A673 (cell line): ENCODE measurements at regions of chr15 and their contacts with region 1.

Region 1: DNA sequence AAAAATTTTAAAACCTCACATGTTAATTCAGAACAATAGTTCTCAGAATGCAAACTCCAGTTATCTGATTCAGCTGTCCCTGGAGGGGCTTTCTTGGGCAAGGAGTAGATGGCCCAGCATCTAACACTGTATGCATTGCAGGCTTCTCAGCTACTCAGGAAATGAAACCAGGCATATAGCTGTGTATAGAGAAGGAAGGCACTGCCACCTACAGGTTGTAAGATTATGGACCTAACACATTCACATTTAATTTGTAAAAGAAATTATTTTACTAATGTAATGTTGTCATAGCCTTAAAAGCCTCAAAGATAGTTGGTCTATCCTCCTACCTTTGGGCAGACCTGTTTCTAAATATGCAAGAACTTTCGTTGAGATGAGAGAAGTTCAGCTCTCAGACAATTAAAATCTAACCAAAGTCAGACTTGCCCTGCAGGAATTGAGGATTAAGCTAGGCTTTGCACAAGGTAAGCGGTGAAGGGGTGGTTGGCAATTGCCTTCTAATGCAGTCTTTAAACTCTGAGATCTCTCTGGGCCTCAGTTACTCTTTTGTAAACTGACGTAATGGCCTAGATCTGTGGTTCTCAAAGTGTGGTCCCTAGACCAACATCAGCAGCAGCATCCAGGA is 132.8 kb upstream of the SLC24A5 start:
- DNase-seq: peak; percentile 87
- H3K4me3 ChIP-seq: no peak overlapping the region
- H3K27ac ChIP-seq: no peak overlapping the region
- H3K4me1 ChIP-seq: peaks cover 12% of the 10 kb centered on the region
- H3K27me3 ChIP-seq: no peaks in the 10 kb centered on the region
- CTCF ChIP-seq: peak; percentile 73

Region 2: DNA sequence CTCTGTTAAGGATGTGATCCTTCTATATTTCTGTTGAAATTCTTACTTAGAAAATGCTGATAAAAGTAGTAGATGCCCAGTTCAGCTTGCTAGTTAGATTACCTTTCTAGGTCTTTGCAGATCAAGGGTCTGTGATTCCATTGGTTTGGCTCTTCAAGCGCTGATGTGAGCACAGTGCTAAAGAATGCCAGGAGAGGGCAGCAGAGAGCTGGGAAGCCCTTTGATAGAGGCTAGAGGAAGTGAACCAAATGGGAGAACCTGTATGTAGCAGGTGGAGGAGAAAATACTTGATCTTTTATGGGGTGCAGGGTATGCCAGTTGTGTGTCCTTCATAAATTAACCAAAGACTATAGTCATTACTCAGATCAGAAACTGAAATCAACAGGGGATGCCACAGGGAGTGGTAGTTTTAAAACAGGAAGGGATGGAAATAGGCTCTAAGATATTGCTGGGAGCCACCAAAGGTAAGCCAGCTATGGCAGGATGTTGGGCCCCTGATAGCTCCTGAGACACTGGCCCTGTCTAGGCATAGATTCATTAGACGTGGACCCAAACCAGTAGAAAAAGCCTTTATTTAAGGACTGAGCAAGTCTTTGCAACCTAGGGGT is 1675.8 kb before region 1 on chr15:
- CTCF ChIA-PET with region 1: no interaction called
- POLR2A ChIA-PET with region 1: no interaction called
- intact Hi-C with region 1: loop called (anchors 5 kb)
- DNase-seq: peak; percentile 77
- H3K4me3 ChIP-seq: no peak overlapping the region
- H3K27ac ChIP-seq: no peak overlapping the region
- H3K4me1 ChIP-seq: no peaks in the 10 kb centered on the region
- H3K27me3 ChIP-seq: no peaks in the 10 kb centered on the region
- CTCF ChIP-seq: peak; percentile 93

Region 3: GRCh38 chr15:47422901-47423665 is 564.9 kb before region 1 on chr15:
- CTCF ChIA-PET with region 1: interaction called, 3 read pairs
- POLR2A ChIA-PET with region 1: no interaction called
- intact Hi-C with region 1: loop called (anchors 1 kb)
- DNase-seq: no peak
- H3K4me3 ChIP-seq: no peak overlapping the region
- H3K27ac ChIP-seq: peak overlapping the region; percentile 84
- H3K4me1 ChIP-seq: peaks cover 68% of the 10 kb centered on the region
- H3K27me3 ChIP-seq: no peaks in the 10 kb centered on the region
- CTCF ChIP-seq: no peak

Region 4: GRCh38 chr15:47711654-47712053 is 276.4 kb before region 1 on chr15:
- CTCF ChIA-PET with region 1: interaction called, 16 read pairs
- POLR2A ChIA-PET with region 1: no interaction called
- intact Hi-C with region 1: loop called (anchors 2 kb)
- DNase-seq: peak; percentile 56
- H3K4me3 ChIP-seq: no peak overlapping the region
- H3K27ac ChIP-seq: no peak overlapping the region
- H3K4me1 ChIP-seq: peaks cover 31% of the 10 kb centered on the region
- H3K27me3 ChIP-seq: no peaks in the 10 kb centered on the region
- CTCF ChIP-seq: peak; percentile 84

Region 5: DNA sequence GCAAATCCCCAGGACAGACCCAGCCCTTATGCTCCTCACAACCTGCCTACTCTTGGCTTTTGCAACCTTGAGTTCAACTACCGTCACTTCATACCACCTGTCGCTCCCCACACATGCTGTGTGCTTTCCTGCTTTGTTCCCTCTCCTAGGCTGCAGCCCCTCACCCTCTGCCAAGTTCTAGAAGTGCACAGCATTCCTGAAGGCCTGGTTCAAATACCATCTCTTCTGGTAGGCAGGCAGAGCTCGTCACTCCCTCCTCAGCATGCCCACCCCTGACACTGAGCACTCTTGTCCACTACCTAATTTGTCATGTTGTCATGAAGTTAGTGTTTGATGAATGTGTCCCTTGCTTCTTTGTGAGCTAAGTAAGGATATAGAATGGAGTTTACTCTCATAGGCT is 141.1 kb before region 1 on chr15:
- CTCF ChIA-PET with region 1: no interaction called
- POLR2A ChIA-PET with region 1: no interaction called
- intact Hi-C with region 1: no loop called
- DNase-seq: no peak
- H3K4me3 ChIP-seq: no peak overlapping the region
- H3K27ac ChIP-seq: no peak overlapping the region
- H3K4me1 ChIP-seq: no peaks in the 10 kb centered on the region
- H3K27me3 ChIP-seq: no peaks in the 10 kb centered on the region
- CTCF ChIP-seq: no peak

Region 6: GRCh38 chr15:48084759-48085590 is 97.0 kb after region 1 on chr15:
- CTCF ChIA-PET with region 1: interaction called, 11 read pairs
- POLR2A ChIA-PET with region 1: no interaction called
- intact Hi-C with region 1: loop called (anchors 5 kb)
- DNase-seq: peak; percentile 73
- H3K4me3 ChIP-seq: no peak overlapping the region
- H3K27ac ChIP-seq: no peak overlapping the region
- H3K4me1 ChIP-seq: no peaks in the 10 kb centered on the region
- H3K27me3 ChIP-seq: no peaks in the 10 kb centered on the region
- CTCF ChIP-seq: peak; percentile 75

Region 7: GRCh38 chr15:48285329-48286214 is 297.6 kb after region 1 on chr15:
- CTCF ChIA-PET with region 1: no interaction called
- POLR2A ChIA-PET with region 1: no interaction called
- intact Hi-C with region 1: loop called (anchors 10 kb)
- DNase-seq: peak; percentile 81
- H3K4me3 ChIP-seq: no peak overlapping the region
- H3K27ac ChIP-seq: no peak overlapping the region
- H3K4me1 ChIP-seq: peaks cover 20% of the 10 kb centered on the region
- H3K27me3 ChIP-seq: no peaks in the 10 kb centered on the region
- CTCF ChIP-seq: peak; percentile 78